ENCODE measurements at regions of chr17 and their contacts with region 1.

Region 1: DNA sequence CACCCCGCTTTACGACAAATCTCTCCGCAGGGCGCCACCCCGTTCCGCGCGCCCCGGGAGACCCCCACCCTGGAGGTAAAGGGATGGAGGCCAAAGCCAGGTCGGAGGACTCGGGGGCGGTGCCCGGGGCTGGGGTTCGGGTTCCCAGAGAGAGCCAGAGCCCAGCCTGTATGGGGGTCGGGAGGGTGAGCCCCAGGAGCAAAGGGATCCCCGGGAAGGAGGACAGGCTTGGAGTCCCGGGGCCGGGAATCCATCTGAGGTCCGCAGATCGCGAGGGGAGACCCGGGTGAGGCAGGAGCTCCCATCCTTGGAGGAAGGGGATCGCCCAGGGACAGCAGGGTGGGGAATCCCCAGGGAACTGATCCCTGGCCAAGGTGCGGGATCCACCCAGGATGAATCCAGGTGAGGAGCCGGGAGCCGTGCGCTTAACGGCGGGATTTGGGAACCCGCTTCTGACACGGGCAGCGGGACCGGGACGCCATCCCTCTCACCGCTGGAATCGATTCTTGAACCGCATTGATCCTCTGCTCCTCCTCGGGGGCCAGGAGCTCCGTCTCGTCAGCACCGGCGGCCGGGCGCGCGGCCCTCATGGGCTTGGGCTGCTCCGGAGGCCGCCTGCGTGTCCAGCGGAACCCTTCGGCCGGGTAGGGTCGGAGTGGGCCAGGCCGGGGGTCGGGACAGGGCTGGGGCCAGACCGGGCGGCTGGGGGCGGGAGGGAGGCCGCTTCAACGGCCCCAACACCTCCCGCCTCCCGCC is at the start of gene MMD:
- DNase-seq: no peak
- H3K4me3 Mint-ChIP-seq: peak within 1 kb of the TSS; percentile 89
- H3K27ac Mint-ChIP-seq: peak within 1 kb of the TSS; percentile 89
- H3K4me1 Mint-ChIP-seq: peaks cover 40% of the 10 kb centered on the region
- H3K27me3 Mint-ChIP-seq: peaks cover 24% of the 10 kb centered on the region
- total RNA-seq, gene MMD: 26.2 to 27.7 TPM

Region 2: GRCh38 chr17:55090079-55090492 is 331.3 kb before region 1 on chr17:
- CTCF ChIA-PET with region 1: no interaction called
- intact Hi-C with region 1: no loop called
- DNase-seq: peak; percentile 54
- H3K4me3 Mint-ChIP-seq: no peak overlapping the region
- H3K27ac Mint-ChIP-seq: no peak overlapping the region
- H3K4me1 Mint-ChIP-seq: peaks cover 6% of the 10 kb centered on the region
- H3K27me3 Mint-ChIP-seq: no peaks in the 10 kb centered on the region

Region 3: DNA sequence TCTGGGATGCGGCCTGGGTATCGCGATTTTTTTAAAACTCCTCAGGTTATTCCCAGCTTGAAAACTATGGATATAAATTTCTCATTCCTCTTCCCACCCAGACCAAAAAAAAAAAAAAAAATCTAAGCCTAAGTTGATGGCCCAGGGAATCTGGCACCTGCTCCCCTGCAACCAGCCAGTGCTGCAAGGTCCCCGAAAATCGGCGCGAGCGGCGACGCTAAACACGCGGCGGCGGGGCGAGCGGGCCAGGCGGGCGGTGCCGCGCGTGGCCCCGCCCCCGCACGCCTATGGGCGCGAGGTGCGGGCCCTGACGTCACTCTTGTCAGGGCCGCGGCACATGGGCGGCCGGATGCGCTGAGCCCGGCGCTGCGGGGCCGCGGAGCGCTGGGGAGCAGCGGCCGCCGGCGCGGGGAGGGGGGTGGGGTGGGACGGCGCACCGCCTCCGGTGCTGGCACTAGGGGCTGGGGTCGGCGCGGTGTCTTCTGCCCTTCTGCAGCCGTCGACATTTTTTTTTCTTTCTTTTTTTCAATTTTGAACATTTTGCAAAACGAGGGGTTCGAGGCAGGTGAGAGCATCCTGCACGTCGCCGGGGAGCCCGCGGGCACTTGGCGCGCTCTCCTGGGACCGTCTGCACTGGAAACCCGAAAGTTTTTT is 156.6 kb before region 1 on chr17 and contains the start of gene HLF:
- CTCF ChIA-PET with region 1: no interaction called
- intact Hi-C with region 1: loop called (anchors 2 kb)
- DNase-seq: peak; percentile 68
- H3K4me3 Mint-ChIP-seq: peak within 1 kb of the TSS; percentile 48
- H3K27ac Mint-ChIP-seq: no peak within 1 kb of the TSS
- H3K4me1 Mint-ChIP-seq: peaks cover 13% of the 10 kb centered on the region
- H3K27me3 Mint-ChIP-seq: peaks cover 78% of the 10 kb centered on the region
- total RNA-seq, gene HLF: 0.79 to 0.86 TPM

Region 4: GRCh38 chr17:55366020-55366481 is 55.3 kb before region 1 on chr17:
- CTCF ChIA-PET with region 1: no interaction called
- intact Hi-C with region 1: no loop called
- DNase-seq: no peak
- H3K4me3 Mint-ChIP-seq: no peak overlapping the region
- H3K27ac Mint-ChIP-seq: no peak overlapping the region
- H3K4me1 Mint-ChIP-seq: peaks cover 2% of the 10 kb centered on the region
- H3K27me3 Mint-ChIP-seq: peaks cover 4% of the 10 kb centered on the region

Region 5: GRCh38 chr17:55458977-55459376 is 37.6 kb after region 1 on chr17:
- CTCF ChIA-PET with region 1: interaction called, 3 read pairs
- intact Hi-C with region 1: loop called (anchors 1 kb)
- DNase-seq: peak; percentile 80
- H3K4me3 Mint-ChIP-seq: no peak overlapping the region
- H3K27ac Mint-ChIP-seq: no peak overlapping the region
- H3K4me1 Mint-ChIP-seq: peaks cover 19% of the 10 kb centered on the region
- H3K27me3 Mint-ChIP-seq: no peaks in the 10 kb centered on the region

Region 6: GRCh38 chr17:55478986-55479385 is 57.6 kb after region 1 on chr17:
- CTCF ChIA-PET with region 1: no interaction called
- intact Hi-C with region 1: no loop called
- DNase-seq: no peak
- H3K4me3 Mint-ChIP-seq: no peak overlapping the region
- H3K27ac Mint-ChIP-seq: no peak overlapping the region
- H3K4me1 Mint-ChIP-seq: no peaks in the 10 kb centered on the region
- H3K27me3 Mint-ChIP-seq: no peaks in the 10 kb centered on the region

Region 7: DNA sequence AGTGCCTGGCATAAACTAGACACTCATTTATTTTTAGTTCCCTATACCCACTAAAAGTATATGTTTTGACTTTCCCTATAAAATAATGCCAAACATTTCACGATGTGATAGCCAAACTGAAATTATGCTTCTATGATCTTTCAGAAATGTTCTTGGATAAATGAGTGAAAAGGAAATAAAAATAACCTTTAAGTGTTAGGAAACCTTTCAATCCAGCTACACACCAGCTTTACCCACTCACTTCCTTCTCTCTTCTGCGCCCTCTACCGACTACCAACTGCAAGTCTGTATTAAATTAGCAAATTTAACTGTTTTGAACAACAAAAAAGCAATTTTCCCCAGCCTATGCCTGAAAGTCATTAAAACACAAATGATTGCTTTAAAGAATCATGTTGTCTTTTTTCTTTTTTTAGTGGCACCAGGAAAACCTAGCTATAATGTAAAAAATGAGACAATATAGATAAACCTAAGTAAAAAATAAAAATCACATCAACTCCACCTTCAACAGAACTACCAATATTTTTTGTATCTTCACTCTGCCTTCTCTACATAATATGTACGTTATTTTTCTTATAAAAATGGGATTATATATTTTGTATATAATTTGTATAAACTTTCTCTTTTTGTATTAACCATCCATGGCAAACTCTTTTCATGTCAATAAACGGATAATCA is 314.5 kb after region 1 on chr17:
- CTCF ChIA-PET with region 1: no interaction called
- intact Hi-C with region 1: loop called (anchors 5 kb)
- DNase-seq: peak; percentile 64
- H3K4me3 Mint-ChIP-seq: no peak overlapping the region
- H3K27ac Mint-ChIP-seq: no peak overlapping the region
- H3K4me1 Mint-ChIP-seq: peaks cover 30% of the 10 kb centered on the region
- H3K27me3 Mint-ChIP-seq: peaks cover 27% of the 10 kb centered on the region

Region 8: DNA sequence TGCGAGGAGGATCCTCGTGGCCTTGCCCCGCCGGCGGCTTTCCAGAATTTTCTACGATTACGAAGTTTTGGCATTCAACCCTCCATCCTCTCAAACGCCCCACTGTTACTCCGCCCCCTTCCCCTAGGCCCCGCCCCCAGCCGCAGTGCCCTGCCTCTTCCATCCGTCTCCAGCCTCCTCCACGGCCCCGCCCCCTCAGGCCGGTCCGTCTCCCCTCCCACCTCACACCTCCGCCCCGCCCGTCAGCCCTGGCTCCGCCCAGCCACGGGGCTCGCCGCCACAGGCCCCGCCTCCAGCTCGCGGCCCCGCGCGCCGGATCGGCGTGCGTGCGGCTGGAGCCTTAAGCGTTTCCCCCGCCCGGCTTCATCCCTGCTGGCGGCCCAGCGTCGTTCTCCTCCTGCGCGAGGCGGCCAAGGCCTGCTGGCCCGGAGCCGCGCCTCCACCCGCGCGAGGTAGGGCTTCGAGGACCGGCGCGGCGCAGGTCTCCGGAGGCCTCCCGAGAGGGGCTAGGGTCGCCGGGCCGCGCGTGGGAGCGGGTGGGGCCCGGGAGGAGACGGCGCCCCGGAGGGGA is 1412.5 kb after region 1 on chr17 and contains the starts of genes C17orf67 and DGKE:
- CTCF ChIA-PET with region 1: no interaction called
- intact Hi-C with region 1: loop called (anchors 5 kb)
- DNase-seq: peak; percentile 99
- H3K4me3 Mint-ChIP-seq: peak within 1 kb of the TSS; percentile 89
- H3K27ac Mint-ChIP-seq: peak within 1 kb of the TSS; percentile 70
- H3K4me1 Mint-ChIP-seq: peaks cover 55% of the 10 kb centered on the region
- H3K27me3 Mint-ChIP-seq: no peaks in the 10 kb centered on the region
- total RNA-seq, gene C17orf67: 1.9 to 2.2 TPM
- total RNA-seq, gene DGKE: 18.1 to 18.4 TPM

Measured in activated naive CD4-positive, alpha-beta T cell treated with anti-CD3 and anti-CD28 coated beads for 36 hours (primary cell).